ENCODE measurements at regions of chr2 and their contacts with region 1.

Region 1: DNA sequence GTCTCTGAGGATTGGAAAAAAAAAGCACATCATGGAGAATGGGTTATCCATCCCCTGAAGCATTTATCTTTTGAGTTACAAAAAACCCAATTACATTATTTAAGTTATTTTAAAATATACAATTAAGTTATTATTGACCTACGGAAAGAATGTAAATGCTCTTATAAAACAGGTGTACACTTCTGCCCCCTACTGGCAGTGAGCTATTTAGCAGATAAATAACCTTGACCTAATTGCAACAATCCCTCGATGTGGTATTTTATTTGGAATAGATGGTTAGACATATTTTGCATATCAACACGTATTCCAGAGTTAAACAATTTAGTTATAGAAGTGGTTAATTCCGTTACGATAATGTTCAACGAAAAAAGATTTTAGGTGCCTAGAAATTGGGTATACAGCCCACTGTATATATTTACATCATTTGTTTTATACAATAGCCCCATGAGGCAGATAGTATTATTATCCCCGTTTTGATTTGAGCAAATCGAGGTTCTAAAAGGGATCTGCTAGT is 9.1 kb upstream of the DAW1 start:
- DNase-seq: peak; percentile 54
- H3K4me3 Mint-ChIP-seq: no peak overlapping the region
- H3K27ac Mint-ChIP-seq: no peak overlapping the region
- H3K4me1 Mint-ChIP-seq: peaks cover 2% of the 10 kb centered on the region
- H3K27me3 Mint-ChIP-seq: no peaks in the 10 kb centered on the region

Region 2: DNA sequence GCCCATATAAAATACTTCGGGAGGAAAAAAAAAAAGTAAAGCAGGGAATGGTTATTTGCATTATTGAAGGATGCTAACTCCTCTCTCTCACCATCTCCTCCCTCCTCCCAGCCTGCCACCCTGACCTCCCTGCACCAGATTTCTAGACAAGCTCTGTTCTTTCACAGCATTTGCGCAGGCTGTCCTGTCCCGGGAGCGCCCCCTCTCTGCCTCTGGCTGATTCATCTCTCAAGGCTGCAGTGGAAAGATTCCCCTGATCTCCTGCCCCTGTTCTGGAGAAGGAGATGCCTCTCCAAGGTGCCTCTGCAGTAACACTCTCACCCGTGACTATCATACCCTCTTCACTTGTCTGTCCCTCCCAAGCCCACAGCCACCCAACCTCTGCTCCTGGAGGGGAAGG is 736.8 kb before region 1 on chr2:
- CTCF ChIA-PET with region 1: no interaction called
- intact Hi-C with region 1: loop called (anchors 2 kb)
- DNase-seq: peak; percentile 20
- H3K4me3 Mint-ChIP-seq: no peak overlapping the region
- H3K27ac Mint-ChIP-seq: no peak overlapping the region
- H3K4me1 Mint-ChIP-seq: no peaks in the 10 kb centered on the region
- H3K27me3 Mint-ChIP-seq: peaks cover 13% of the 10 kb centered on the region

Region 3: DNA sequence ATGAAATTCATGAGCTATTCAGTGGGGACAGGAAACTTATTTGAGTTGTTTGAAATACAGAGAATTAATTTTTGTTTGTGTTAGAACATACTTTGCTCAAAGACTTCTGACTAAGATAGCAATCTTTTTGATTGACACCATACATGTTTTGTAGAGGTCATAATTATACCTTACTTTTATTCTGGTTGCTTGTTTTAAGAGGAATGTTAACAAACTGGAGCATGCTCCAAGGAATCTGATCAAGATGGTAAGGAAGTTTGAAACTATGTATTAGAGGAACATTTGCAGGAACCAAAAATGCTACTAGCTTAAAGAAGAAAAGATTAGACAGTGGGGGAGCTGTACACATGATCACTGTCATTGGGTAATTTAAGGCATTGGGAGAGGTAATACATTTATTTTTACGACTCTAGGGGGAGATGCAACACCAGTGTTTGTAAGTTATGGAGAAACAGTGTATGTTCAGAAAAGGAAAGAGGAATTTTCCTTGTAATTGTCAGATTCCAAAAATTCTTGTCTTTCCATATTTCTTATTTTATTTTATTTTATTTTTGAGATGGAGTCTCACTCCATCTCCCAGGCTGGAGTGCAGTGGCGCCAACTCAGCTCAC is 382.3 kb before region 1 on chr2:
- CTCF ChIA-PET with region 1: no interaction called
- intact Hi-C with region 1: loop called (anchors 5 kb)
- DNase-seq: no peak
- H3K4me3 Mint-ChIP-seq: peak overlapping the region; percentile 17
- H3K27ac Mint-ChIP-seq: peak overlapping the region; percentile 82
- H3K4me1 Mint-ChIP-seq: peaks cover 81% of the 10 kb centered on the region
- H3K27me3 Mint-ChIP-seq: no peaks in the 10 kb centered on the region

Region 4: DNA sequence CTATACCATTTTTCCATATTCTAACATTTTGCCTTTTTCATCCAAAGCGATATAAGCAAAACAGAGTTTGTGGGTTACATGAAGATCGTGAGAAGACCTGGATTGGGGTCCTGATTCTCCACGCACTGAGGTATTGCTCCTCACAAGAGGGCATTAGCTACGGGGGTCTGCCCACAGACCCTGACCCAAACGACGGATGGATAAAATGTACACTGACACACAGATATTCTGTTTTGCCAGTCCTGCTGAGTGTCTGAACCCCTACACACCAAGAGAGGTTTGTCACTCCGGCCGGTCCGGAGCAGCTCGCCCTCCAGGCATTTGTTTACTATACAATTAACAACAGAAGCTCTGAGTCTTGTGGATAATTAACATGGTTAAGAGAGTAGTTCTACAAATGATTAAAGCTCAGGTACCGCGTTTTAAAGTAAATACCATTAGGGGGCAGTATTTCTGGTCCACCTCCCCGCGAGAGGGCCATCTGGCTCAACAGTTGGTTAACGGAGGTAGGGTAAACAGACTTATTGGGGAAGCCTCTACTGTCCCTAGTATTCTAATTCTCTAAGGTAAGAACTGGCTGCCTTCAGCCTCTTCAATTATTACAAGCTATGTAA is 88.2 kb before region 1 on chr2:
- CTCF ChIA-PET with region 1: interaction called, 12 read pairs
- intact Hi-C with region 1: loop called (anchors 1 kb)
- DNase-seq: peak; percentile 14
- H3K4me3 Mint-ChIP-seq: no peak overlapping the region
- H3K27ac Mint-ChIP-seq: peak overlapping the region; percentile 67
- H3K4me1 Mint-ChIP-seq: peaks cover 17% of the 10 kb centered on the region
- H3K27me3 Mint-ChIP-seq: no peaks in the 10 kb centered on the region

Region 5: DNA sequence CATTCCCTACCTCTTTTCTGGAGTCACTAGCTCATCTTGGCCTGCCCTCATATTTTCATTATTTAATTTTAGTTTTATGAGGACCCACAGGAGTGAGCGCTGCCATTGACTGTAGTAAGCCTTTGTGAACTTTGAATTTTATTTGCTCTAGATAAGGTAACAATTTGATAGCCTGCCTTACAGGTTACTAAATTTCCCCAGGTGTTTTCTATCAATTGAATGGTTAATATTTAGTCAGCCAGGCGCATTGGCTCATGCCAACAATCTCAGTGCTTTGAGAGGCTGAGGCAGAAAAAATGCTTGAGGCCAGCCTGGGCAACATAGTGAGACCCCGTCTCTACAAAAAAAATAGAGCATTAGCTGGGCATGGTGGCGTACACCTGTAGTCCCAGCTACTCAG is 59.4 kb after region 1 on chr2:
- CTCF ChIA-PET with region 1: no interaction called
- intact Hi-C with region 1: no loop called
- DNase-seq: no peak
- H3K4me3 Mint-ChIP-seq: no peak overlapping the region
- H3K27ac Mint-ChIP-seq: no peak overlapping the region
- H3K4me1 Mint-ChIP-seq: no peaks in the 10 kb centered on the region
- H3K27me3 Mint-ChIP-seq: peaks cover 4% of the 10 kb centered on the region